ENCODE measurements at regions of chr5 and their contacts with region 1.

Region 1: GRCh38 chr5:154461531-154461930 is 15.7 kb downstream of the SAP30L start:
- H3K4me3 ChIP-seq: no peak overlapping the region
- H3K27ac ChIP-seq: no peak overlapping the region
- H3K4me1 ChIP-seq: no peaks in the 10 kb centered on the region
- CTCF ChIP-seq: peak; percentile 34; the same call in 1 of the 2 replicates

Region 2: GRCh38 chr5:154242964-154243376 is 218.6 kb before region 1 on chr5:
- CTCF ChIA-PET with region 1: no interaction called
- POLR2A ChIA-PET with region 1: no interaction called
- H3K4me3 ChIP-seq: no peak overlapping the region
- H3K27ac ChIP-seq: no peak overlapping the region
- H3K4me1 ChIP-seq: no peaks in the 10 kb centered on the region
- CTCF ChIP-seq: no peak

Region 3: GRCh38 chr5:154421868-154422267 is 39.7 kb before region 1 on chr5:
- CTCF ChIA-PET with region 1: interaction called, 13 read pairs
- POLR2A ChIA-PET with region 1: no interaction called
- H3K4me3 ChIP-seq: no peak overlapping the region
- H3K27ac ChIP-seq: no peak overlapping the region
- H3K4me1 ChIP-seq: no peaks in the 10 kb centered on the region
- CTCF ChIP-seq: peak; percentile 36; the same call in 1 of the 2 replicates

Region 4: GRCh38 chr5:154541553-154541952 is 80.0 kb after region 1 on chr5:
- CTCF ChIA-PET with region 1: no interaction called
- POLR2A ChIA-PET with region 1: no interaction called
- H3K4me3 ChIP-seq: no peak overlapping the region
- H3K27ac ChIP-seq: no peak overlapping the region
- H3K4me1 ChIP-seq: no peaks in the 10 kb centered on the region; the same call in 1 of the 2 replicates
- CTCF ChIP-seq: no peak

Measured in HEK293 (cell line).